ENCODE measurements at regions of chr13 and their contacts with region 1.

Region 1: DNA sequence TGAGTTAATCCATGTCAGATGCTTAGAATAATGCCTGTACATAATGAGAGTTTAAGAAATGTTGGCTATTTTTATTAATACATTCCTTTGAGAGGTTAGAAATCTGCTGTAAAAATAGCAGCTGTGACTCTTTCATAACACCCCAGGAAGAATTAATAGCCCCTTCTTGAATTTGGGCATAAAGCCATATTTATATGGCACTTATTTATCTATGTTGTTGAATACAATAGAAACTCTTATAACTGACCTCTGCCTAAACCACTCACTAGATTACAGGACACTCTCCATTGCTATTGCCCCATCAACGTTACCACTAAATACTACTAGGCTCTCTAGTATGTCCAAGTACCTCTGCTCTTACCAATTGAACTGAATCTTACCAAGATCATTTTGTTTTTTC is 16.3 kb downstream of the NEK5 start:
- DNase-seq: no peak

Region 2: DNA sequence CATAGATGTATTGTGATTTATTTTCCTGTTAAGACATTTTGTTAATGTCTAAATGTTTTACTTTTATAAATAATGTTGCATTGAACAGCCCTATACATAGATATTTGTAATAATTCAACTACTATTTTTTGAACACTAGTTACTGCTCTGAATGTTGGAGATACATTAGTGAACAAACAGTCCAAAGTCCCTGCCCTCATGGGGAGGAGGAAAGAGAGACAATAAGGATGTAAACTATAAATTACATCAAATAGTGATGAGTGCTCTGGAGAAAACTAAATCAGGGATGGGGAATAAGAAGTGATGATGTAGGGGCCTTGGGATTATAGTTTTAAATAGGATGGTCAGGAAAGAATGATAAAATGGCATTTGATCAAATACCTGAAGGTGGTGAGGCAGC is 647.5 kb before region 1 on chr13:
- intact Hi-C with region 1: no loop called
- DNase-seq: no peak

Region 3: DNA sequence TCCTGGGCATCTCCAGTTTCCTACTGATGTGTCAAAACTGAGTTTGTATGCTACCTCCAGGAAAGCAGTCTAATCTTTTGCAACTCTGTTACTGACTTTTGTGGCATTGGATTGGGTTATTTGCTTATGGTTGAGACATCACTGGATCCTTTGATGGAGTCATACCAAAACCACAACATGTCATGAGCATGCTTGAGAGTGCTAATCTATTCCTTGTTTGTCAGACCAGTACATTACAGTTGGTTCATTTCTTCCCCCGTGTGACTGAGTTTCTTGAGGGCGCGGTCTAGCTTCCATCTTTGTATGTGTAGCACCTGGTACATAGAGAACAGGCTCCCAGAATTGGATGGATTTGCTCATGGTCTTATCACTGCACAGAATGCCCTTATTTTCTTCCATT is 583.3 kb after region 1 on chr13:
- intact Hi-C with region 1: loop called in 1 of 2 experiments (anchors 5 kb)
- DNase-seq: no peak